ENCODE measurements at regions of chr2 and their contacts with region 1.

Region 1: GRCh38 chr2:109736177-109736827 is 57.8 kb upstream of the RGPD5 start:
- DNase-seq: peak; percentile 72 to 79
- H3K4me3 ChIP-seq: no peak overlapping the region
- H3K4me3 Mint-ChIP-seq: no peak overlapping the region
- H3K27ac Mint-ChIP-seq: no peak overlapping the region
- H3K4me1 ChIP-seq: 0 out of 2 replicates have a peak, but pooled peaks cover 3% of the 10 kb centered on the region
- H3K4me1 Mint-ChIP-seq: peaks cover 6% of the 10 kb centered on the region
- H3K27me3 ChIP-seq: no peaks in the 10 kb centered on the region
- H3K27me3 Mint-ChIP-seq: no peaks in the 10 kb centered on the region
- CTCF ChIP-seq: peak; percentile 70 to 89

Region 2: DNA sequence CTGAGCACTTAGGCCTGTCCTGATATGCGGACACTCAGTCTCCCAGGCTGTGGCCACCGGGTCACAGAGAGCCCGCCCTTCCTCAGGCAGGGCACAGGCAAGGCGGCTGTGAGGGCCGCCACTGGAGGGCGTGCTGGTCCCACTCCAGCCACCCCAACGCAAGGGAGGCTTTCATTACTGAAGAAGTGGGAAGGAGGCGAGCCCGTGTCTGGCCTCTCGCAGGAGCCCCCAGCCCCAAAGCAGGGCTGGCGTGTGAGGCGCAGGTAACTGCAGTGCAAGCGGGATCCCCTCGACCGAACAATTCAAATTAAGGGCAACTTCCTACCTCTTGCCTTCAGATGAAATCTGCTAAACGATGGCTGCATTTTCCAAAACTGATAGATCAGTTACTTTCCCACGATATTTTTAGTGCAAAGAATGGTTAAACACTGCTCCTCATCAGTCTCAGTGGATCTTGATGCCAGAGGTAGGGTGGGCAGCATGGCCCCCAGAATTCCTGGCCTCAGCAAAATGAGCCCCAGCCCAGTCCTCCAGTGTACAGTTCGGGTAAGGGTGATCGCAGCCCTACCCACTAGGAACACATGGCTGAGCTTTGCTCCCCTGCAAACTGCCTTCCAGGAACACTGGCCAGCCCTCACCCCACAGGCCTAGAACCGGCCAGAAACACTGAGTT is 219.7 kb before region 1 on chr2:
- CTCF ChIA-PET with region 1: no interaction called
- POLR2A ChIA-PET with region 1: no interaction called
- intact Hi-C with region 1: loop called (anchors 1 kb)
- DNase-seq: peak; percentile 75 to 82
- H3K4me3 ChIP-seq: no peak overlapping the region
- H3K4me3 Mint-ChIP-seq: no peak overlapping the region
- H3K27ac Mint-ChIP-seq: no peak overlapping the region
- H3K4me1 ChIP-seq: peaks cover 3% of the 10 kb centered on the region; the same call in 1 of the 2 replicates
- H3K4me1 Mint-ChIP-seq: no peaks in the 10 kb centered on the region
- H3K27me3 ChIP-seq: no peaks in the 10 kb centered on the region
- H3K27me3 Mint-ChIP-seq: no peaks in the 10 kb centered on the region
- CTCF ChIP-seq: peak; percentile 75 to 94

Region 3: GRCh38 chr2:109637749-109638570 is 98.3 kb before region 1 on chr2:
- CTCF ChIA-PET with region 1: no interaction called
- POLR2A ChIA-PET with region 1: no interaction called
- intact Hi-C with region 1: no loop called
- DNase-seq: no peak
- H3K4me3 ChIP-seq: no peak overlapping the region
- H3K4me3 Mint-ChIP-seq: no peak overlapping the region
- H3K27ac Mint-ChIP-seq: no peak overlapping the region
- H3K4me1 ChIP-seq: peaks cover 18% of the 10 kb centered on the region
- H3K4me1 Mint-ChIP-seq: peaks cover 15% of the 10 kb centered on the region
- H3K27me3 ChIP-seq: no peaks in the 10 kb centered on the region
- H3K27me3 Mint-ChIP-seq: no peaks in the 10 kb centered on the region
- CTCF ChIP-seq: no peak